ENCODE measurements at regions of chr15 and their contacts with region 1.

Region 1: GRCh38 chr15:63048115-63048775 is 5.7 kb downstream of the TPM1 start:
- DNase-seq: peak; percentile 81
- H3K4me3 Mint-ChIP-seq: peak overlapping the region; percentile 89
- H3K27ac Mint-ChIP-seq: no peak overlapping the region
- H3K4me1 Mint-ChIP-seq: peaks cover 11% of the 10 kb centered on the region
- H3K27me3 Mint-ChIP-seq: peaks cover 57% of the 10 kb centered on the region

Region 2: DNA sequence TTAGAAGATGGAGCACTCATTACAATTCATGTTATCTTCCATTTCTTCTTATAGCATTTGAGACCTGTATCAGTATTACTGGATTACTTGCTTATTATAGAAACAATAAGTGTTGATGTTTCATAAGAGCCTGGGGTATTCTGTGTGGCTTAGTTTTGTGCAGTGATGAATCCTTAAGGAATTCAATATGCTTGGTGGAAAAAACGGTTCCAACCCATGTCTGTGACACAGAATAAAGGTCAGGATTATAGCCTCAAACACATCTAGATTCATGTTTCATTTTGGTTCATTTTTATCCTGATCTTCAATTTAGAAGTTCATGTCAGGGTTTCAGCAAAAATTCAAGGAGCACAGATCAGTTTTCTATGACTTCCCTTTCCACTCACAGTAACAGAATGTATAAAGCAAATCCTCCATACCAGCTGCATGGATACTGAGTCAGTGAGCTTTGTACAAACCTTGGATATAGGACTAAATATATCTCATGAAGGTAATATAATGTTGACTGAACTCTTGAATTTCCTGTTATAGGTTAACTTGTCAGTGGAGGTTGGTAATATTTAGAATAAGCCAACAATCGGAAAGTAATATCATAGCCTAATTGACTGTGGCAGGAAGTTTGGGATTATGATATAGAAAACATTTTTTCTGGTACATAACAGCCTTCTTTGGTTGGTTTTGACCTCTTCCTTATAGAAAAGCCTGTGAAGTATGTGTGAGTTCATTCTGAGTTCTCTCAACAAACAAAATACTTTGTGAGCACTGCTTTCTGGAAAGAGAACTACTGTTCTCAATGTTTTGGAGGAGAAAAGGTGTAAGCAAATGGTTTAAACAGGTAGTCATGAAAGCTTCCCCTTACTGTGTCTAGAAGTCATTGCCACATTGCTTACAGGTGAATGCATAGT is 223.9 kb before region 1 on chr15:
- intact Hi-C with region 1: no loop called
- DNase-seq: no peak
- H3K4me3 Mint-ChIP-seq: no peak overlapping the region
- H3K27ac Mint-ChIP-seq: no peak overlapping the region
- H3K4me1 Mint-ChIP-seq: no peaks in the 10 kb centered on the region
- H3K27me3 Mint-ChIP-seq: peaks cover 11% of the 10 kb centered on the region

Region 3: DNA sequence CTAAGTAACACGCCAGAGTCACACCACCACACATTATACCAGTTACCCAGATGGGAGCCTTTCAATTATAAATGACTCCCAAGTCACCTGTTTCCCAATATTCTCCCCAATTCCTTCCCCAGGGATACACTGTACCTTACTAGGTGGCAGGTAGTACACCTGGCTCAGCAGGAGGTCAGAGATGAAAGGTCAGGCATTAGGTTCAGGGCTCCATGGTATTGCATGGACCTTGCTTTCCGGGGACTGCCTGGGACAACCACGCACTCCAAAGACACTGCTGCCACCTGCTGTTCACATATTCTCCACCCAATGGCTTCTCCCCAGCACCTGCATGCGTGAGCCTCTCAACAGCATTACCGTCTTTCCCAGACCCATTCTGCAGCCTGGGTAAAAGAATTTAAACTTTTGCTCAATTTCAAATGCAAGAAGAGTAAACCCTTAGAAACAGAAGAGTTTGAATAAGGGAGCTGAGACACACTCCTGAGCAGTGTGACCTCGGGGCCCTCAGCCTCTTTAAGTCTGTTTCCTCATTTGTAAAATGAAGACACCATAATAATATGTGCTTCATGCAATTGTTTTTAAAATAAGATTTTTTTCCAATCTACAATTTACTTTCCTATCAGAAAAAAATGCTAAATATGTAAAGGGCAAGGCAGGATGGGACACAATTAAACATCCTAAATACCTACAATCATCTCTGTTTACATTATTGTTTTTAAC is 45.4 kb after region 1 on chr15:
- intact Hi-C with region 1: loop called (anchors 1 kb)
- DNase-seq: peak; percentile 54
- H3K4me3 Mint-ChIP-seq: no peak overlapping the region
- H3K27ac Mint-ChIP-seq: no peak overlapping the region
- H3K4me1 Mint-ChIP-seq: peaks cover 7% of the 10 kb centered on the region
- H3K27me3 Mint-ChIP-seq: peaks cover 6% of the 10 kb centered on the region

Region 4: DNA sequence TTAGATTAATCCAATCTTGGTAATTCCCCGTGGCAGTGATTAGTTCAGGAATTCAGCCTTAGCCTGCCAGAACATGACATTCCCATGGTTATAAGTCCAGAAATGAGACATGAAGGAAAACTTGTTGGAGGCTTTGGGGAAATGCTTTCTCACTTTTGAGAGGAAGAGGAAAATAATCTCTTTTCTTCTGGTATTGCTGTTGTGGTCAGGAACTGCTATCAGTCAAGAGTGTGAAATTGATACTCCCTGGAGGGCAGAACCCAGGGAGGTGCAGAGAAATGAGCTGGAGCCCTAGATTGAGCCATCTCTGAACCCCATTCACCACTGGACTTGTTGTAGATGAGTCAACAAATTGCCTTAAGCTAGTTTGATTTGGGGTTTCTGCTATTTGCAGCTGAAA is 190.6 kb after region 1 on chr15:
- intact Hi-C with region 1: loop called (anchors 5 kb)
- DNase-seq: no peak
- H3K4me3 Mint-ChIP-seq: no peak overlapping the region
- H3K27ac Mint-ChIP-seq: peak overlapping the region; percentile 54
- H3K4me1 Mint-ChIP-seq: peaks cover 61% of the 10 kb centered on the region
- H3K27me3 Mint-ChIP-seq: no peaks in the 10 kb centered on the region

Region 5: GRCh38 chr15:63277038-63277892 is 229.0 kb after region 1 on chr15 and contains the start of gene APH1B:
- intact Hi-C with region 1: loop called (anchors 5 kb)
- DNase-seq: peak; percentile 77
- H3K4me3 Mint-ChIP-seq: peak within 1 kb of the TSS; percentile 87
- H3K27ac Mint-ChIP-seq: peak within 1 kb of the TSS; percentile 85
- H3K4me1 Mint-ChIP-seq: peaks cover 30% of the 10 kb centered on the region
- H3K27me3 Mint-ChIP-seq: no peaks in the 10 kb centered on the region
- total RNA-seq, gene APH1B: 9.5 and 9.8 TPM in 2 replicates

Region 6: DNA sequence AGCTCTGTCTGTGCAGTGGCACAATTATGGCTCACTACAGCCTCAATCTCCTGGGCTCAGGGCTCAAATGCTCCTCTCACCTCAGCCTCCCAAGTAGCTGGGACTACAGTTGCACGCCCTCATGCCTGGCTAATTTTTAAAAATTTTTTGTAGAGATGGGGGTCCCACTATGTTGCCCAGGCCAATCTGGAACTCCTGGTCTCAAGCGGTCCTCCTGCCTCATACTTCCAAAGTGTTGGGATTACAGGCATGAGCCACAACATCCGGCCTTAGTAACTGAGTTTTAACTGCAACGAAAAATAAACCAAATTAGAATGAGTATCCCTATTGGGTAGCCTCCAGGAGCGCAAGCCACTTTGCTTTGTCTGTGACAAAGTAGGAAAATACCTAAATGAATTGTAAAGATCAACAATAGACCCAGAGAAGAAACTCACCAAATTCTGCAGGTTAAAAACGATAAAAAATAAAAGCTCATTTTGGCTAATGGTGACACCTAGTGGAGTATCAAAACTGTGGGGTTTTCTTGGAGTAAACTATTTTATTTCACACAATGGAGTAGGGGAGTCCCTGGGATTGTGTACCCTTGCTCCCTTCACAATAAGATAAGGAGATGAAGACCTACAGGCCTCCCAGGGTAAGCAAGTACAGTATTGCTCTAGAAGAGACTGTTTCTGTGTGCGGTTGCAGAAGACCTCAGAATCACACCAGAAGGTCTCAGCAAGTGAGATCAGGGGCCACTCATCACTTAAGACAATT is 354.4 kb after region 1 on chr15:
- intact Hi-C with region 1: loop called (anchors 5 kb)
- DNase-seq: no peak
- H3K4me3 Mint-ChIP-seq: no peak overlapping the region
- H3K27ac Mint-ChIP-seq: no peak overlapping the region
- H3K4me1 Mint-ChIP-seq: peaks cover 29% of the 10 kb centered on the region
- H3K27me3 Mint-ChIP-seq: no peaks in the 10 kb centered on the region

Measured in activated T-helper 2 cell treated with anti-CD3 and anti-CD28 coated beads, Interferon-gamma antibody, Interleukin-2, Interleukin-4, amounts not matched to agents 10 μg/mL and 5 μg/mL and 100 μg/mL, durations not matched to agents 14 hours and 24 hours and 36 hours (primary cell).